ENCODE measurements at regions of chr5 and their contacts with region 1.

Region 1: DNA sequence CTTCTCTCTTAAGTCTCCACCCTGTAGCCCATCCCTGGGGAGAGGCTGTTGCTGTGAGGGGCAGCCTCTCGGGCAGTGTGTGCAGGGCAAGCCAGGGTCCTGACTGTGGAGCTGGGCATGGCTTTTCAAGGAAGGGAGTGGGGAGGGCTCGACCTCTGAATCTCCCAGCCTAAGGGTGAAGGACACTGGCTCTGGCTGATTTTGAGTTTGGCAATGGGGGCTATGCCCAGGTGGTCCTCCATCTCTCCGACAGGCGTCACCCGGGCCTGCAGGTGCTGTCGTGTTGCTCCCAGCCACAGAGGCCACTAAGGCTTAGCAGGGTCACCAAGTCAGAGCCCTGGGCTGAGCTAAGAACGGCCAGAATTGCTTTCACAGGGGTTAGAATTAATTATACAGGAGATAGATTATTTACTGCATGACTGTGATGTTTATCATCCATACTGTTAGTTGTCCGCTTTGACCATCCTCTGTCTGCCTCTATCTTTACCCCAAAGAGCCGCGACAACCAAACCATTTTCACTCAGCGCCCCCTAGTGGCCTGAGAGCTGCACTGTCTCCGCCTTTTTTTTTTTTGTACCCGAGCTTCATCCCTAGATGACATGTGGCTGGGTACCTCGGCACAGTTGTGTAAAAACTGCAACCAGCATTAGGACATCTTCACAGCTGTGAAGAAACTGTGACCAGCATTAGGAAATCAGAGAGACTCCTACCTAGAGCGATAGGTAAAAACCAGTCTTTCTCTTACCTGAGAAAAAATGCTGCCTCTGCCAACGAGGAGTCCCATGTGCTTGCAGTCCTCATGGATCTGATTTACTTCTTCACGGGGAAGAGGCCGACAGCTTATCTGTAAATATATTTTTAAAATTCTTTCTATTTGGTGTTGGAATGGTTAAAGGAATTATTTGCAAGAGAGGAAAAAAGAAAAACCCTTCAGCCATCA is 44.5 kb downstream of the AGXT2 start:
- DNase-seq: peak; percentile 43
- ATAC-seq: peak; percentile 94
- H3K4me3 ChIP-seq: no peak overlapping the region
- H3K27ac ChIP-seq: no peak overlapping the region
- H3K4me1 ChIP-seq: no peaks in the 10 kb centered on the region
- H3K27me3 ChIP-seq: no peaks in the 10 kb centered on the region
- CTCF ChIP-seq: peak; percentile 87
- EP300 ChIP-seq: no peak
- POLR2A ChIP-seq: no peak
- RAD21 ChIP-seq: peak; percentile 22; the same call in 1 of the 2 replicates

Region 2: DNA sequence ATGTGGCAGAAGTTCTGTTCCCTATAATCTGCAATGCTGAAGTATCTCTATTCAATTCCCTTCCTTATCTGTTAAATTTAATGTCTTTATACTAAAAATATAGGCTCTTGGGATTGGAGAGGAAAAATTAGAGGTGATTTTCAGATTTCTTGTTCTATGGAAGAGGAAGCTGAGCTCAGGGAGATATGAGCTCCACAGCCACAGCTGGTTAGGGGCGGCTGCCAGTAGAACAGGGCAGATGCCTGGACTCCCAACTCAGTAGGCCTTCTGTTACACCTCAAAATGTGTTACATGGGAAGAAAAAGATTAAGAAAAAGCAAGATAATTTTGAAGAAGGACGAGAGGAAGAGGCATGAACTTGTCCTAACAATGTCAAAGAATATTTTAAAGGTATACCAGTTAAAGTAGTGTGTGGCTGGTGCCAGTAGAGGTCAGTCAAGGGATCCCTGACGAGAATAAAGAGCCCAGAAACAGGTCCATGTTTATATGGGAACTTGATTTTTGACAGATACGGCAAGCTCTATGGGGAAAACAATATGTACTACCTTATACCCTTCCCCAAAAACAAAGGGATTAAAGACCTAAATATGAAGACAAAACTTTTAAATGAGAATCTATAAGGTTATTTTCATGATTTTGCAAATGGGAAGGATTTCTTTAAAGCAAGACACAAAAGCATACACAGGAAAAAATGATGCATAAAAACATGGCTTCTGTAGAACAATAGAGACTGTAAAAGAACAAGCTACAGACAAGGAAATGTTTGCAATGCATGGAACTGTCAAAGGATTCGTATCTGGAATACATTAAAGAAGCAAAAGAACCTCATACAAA is 45.2 kb before region 1 on chr5:
- CTCF ChIA-PET with region 1: interaction called, 24 read pairs
- POLR2A ChIA-PET with region 1: no interaction called
- in situ Hi-C with region 1: no loop called
- intact Hi-C with region 1: loop called (anchors 1 kb)
- DNase-seq: peak; percentile 30
- ATAC-seq: peak; percentile 94
- H3K4me3 ChIP-seq: no peak overlapping the region
- H3K27ac ChIP-seq: no peak overlapping the region
- H3K4me1 ChIP-seq: peaks cover 7% of the 10 kb centered on the region
- H3K27me3 ChIP-seq: no peaks in the 10 kb centered on the region
- CTCF ChIP-seq: peak; percentile 67
- EP300 ChIP-seq: no peak
- POLR2A ChIP-seq: no peak
- RAD21 ChIP-seq: peak; percentile 32; the same call in 1 of the 2 replicates

Region 3: GRCh38 chr5:35029333-35029732 is 26.0 kb after region 1 on chr5:
- CTCF ChIA-PET with region 1: no interaction called
- POLR2A ChIA-PET with region 1: no interaction called
- in situ Hi-C with region 1: no loop called
- intact Hi-C with region 1: no loop called
- DNase-seq: no peak
- ATAC-seq: no peak
- H3K4me3 ChIP-seq: no peak overlapping the region
- H3K27ac ChIP-seq: no peak overlapping the region
- H3K4me1 ChIP-seq: peaks cover 28% of the 10 kb centered on the region
- H3K27me3 ChIP-seq: no peaks in the 10 kb centered on the region; a peak in 1 of 5 replicates
- CTCF ChIP-seq: no peak
- EP300 ChIP-seq: no peak
- POLR2A ChIP-seq: no peak
- RAD21 ChIP-seq: no peak

Region 4: DNA sequence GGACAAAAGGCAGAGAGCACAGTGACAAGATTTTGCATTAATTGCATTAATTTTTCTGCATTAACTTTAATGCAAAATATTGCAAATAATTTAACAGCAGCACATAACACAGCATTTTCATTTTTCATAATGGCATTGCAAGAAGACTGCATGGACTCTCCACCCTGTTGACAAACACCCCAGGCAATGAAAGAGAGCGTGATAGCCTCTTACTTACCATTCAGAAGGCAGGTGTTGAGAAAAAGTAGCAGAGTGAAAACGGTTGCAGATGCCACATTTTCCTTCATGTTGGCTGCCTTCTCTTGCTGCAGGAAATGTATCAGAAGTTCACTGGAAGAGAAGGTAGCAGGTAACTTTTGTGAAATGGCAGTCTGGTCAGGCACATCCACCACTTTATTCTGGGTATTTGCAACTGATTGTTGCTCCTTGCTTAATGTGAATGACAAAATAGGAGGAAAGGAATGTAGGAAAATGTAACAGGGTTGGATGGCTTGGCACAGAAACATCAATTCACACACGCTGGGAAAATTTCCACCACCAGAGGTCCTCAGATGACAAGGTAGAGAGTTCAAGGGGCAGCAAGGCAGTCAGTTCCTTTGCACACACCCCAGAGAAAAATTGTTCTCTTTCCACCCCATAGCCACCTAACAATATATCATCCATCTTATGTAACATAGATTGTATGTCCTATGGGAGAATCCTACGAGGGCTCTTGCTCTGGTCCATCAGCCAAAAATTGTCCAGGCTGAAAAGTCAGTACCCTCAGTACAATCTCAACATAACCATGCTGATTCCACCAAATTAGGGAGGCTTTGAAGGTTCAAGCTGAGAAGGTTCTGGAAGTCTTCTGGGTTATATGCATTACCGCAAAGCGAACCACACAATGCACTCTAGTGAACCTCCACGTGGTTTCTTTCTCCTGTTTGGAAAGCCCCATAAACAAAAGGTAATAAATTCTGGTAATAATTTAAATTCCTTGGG is 86.3 kb after region 1 on chr5:
- CTCF ChIA-PET with region 1: no interaction called
- POLR2A ChIA-PET with region 1: no interaction called
- in situ Hi-C with region 1: no loop called
- intact Hi-C with region 1: no loop called
- DNase-seq: peak; percentile 64
- ATAC-seq: peak; percentile 85
- H3K4me3 ChIP-seq: no peak overlapping the region
- H3K27ac ChIP-seq: no peak overlapping the region
- H3K4me1 ChIP-seq: peaks cover 13% of the 10 kb centered on the region
- H3K27me3 ChIP-seq: no peaks in the 10 kb centered on the region
- CTCF ChIP-seq: peak; percentile 89
- EP300 ChIP-seq: no peak
- POLR2A ChIP-seq: no peak
- RAD21 ChIP-seq: peak; percentile 93

Region 5: GRCh38 chr5:35212122-35212982 is 209.1 kb after region 1 on chr5:
- CTCF ChIA-PET with region 1: no interaction called
- POLR2A ChIA-PET with region 1: no interaction called
- in situ Hi-C with region 1: no loop called
- intact Hi-C with region 1: no loop called
- DNase-seq: no peak
- ATAC-seq: no peak
- H3K4me3 ChIP-seq: no peak overlapping the region
- H3K27ac ChIP-seq: no peak overlapping the region
- H3K4me1 ChIP-seq: no peaks in the 10 kb centered on the region
- H3K27me3 ChIP-seq: no peaks in the 10 kb centered on the region
- CTCF ChIP-seq: no peak
- EP300 ChIP-seq: no peak
- POLR2A ChIP-seq: no peak
- RAD21 ChIP-seq: no peak